CD8-positive, alpha-beta T cell (primary cell): ENCODE measurements at regions of chr6 and their contacts with region 1.

Region 1: GRCh38 chr6:41367700-41368099 is 32.3 kb downstream of the NCR2 start:
- DNase-seq: peak in 1 of 9 experiments; percentile 42
- ATAC-seq: no peak
- H3K4me3 ChIP-seq: no peak overlapping the region
- H3K4me3 Mint-ChIP-seq: no peak overlapping the region
- H3K27ac ChIP-seq: no peak overlapping the region
- H3K27ac Mint-ChIP-seq: no peak overlapping the region
- H3K4me1 ChIP-seq: peaks cover 16% of the 10 kb centered on the region
- H3K4me1 Mint-ChIP-seq: peaks cover 24% of the 10 kb centered on the region
- H3K27me3 ChIP-seq: peaks cover 21 to 35% of the 10 kb centered on the region in 2 experiments
- H3K27me3 Mint-ChIP-seq: peaks cover 25% of the 10 kb centered on the region
- CTCF ChIP-seq: no peak

Region 2: GRCh38 chr6:41306187-41306854 is 61.4 kb before region 1 on chr6:
- CTCF ChIA-PET with region 1: interaction called, 44 read pairs
- POLR2A ChIA-PET with region 1: no interaction called
- intact Hi-C with region 1: loop called (anchors 1 kb)
- DNase-seq: peak in 7 of 9 experiments; percentile 19 to 78 (median 34)
- ATAC-seq: no peak
- H3K4me3 ChIP-seq: no peak overlapping the region
- H3K4me3 Mint-ChIP-seq: no peak overlapping the region
- H3K27ac ChIP-seq: no peak overlapping the region
- H3K27ac Mint-ChIP-seq: no peak overlapping the region
- H3K4me1 ChIP-seq: peaks cover 4% of the 10 kb centered on the region
- H3K4me1 Mint-ChIP-seq: peaks cover 13% of the 10 kb centered on the region
- H3K27me3 ChIP-seq: no peaks in the 10 kb centered on the region
- H3K27me3 Mint-ChIP-seq: no peaks in the 10 kb centered on the region
- CTCF ChIP-seq: peak; percentile 79

Region 3: GRCh38 chr6:41334482-41335040 is 33.1 kb before region 1 on chr6:
- CTCF ChIA-PET with region 1: interaction called, 20 read pairs
- POLR2A ChIA-PET with region 1: interaction called, 4 read pairs
- intact Hi-C with region 1: loop called (anchors 1 to 2 kb)
- DNase-seq: peak in 2 of 9 experiments; percentile 47 to 62
- ATAC-seq: no peak
- H3K4me3 ChIP-seq: no peak overlapping the region
- H3K4me3 Mint-ChIP-seq: peak overlapping the region; percentile 69
- H3K27ac ChIP-seq: peak overlapping the region; percentile 47 to 87
- H3K27ac Mint-ChIP-seq: peak overlapping the region; percentile 98
- H3K4me1 ChIP-seq: peaks cover 57% of the 10 kb centered on the region
- H3K4me1 Mint-ChIP-seq: peaks cover 64% of the 10 kb centered on the region
- H3K27me3 ChIP-seq: no peaks in the 10 kb centered on the region
- H3K27me3 Mint-ChIP-seq: no peaks in the 10 kb centered on the region
- CTCF ChIP-seq: no peak

Region 4: DNA sequence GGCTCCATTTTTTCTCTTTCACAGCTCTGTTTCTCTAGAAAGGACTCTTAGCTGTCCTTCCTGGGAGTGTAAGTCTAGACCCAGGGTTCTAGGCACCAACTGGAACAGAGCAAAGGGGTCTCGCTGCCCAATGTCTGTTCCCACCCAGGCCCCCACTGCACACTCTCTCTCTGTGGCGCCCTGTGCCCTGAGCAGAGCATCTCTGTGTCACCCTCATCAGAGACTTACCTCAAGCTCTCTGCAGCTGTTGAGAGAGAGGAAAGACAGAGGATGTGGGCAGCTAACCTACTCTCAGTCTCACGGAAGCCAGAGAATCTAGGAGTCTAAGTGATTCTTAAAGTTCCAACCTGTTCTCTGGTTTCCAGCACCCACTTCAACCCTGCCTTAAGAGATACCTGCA is 22.8 kb before region 1 on chr6:
- CTCF ChIA-PET with region 1: interaction called, 28 read pairs
- POLR2A ChIA-PET with region 1: no interaction called
- intact Hi-C with region 1: no loop called
- DNase-seq: peak in 8 of 9 experiments; percentile 16 to 85 (median 48)
- ATAC-seq: peak; percentile 99
- H3K4me3 ChIP-seq: no peak overlapping the region
- H3K4me3 Mint-ChIP-seq: peak overlapping the region; percentile 37
- H3K27ac ChIP-seq: peak overlapping the region in 1 of 2 experiments; percentile 59
- H3K27ac Mint-ChIP-seq: peak overlapping the region; percentile 90
- H3K4me1 ChIP-seq: peaks cover 20% of the 10 kb centered on the region
- H3K4me1 Mint-ChIP-seq: peaks cover 28% of the 10 kb centered on the region
- H3K27me3 ChIP-seq: no peaks in the 10 kb centered on the region
- H3K27me3 Mint-ChIP-seq: peaks cover under 1% of the 10 kb centered on the region
- CTCF ChIP-seq: no peak

Region 5: GRCh38 chr6:41352396-41352795 is 15.3 kb before region 1 on chr6:
- CTCF ChIA-PET with region 1: interaction called, 21 read pairs
- POLR2A ChIA-PET with region 1: no interaction called
- intact Hi-C with region 1: no loop called
- DNase-seq: peak in 1 of 9 experiments; percentile 32
- ATAC-seq: no peak
- H3K4me3 ChIP-seq: no peak overlapping the region
- H3K4me3 Mint-ChIP-seq: no peak overlapping the region
- H3K27ac ChIP-seq: no peak overlapping the region
- H3K27ac Mint-ChIP-seq: no peak overlapping the region
- H3K4me1 ChIP-seq: no peaks in the 10 kb centered on the region
- H3K4me1 Mint-ChIP-seq: no peaks in the 10 kb centered on the region
- H3K27me3 ChIP-seq: no peaks in the 10 kb centered on the region
- H3K27me3 Mint-ChIP-seq: peaks cover 7% of the 10 kb centered on the region
- CTCF ChIP-seq: no peak

Region 6: DNA sequence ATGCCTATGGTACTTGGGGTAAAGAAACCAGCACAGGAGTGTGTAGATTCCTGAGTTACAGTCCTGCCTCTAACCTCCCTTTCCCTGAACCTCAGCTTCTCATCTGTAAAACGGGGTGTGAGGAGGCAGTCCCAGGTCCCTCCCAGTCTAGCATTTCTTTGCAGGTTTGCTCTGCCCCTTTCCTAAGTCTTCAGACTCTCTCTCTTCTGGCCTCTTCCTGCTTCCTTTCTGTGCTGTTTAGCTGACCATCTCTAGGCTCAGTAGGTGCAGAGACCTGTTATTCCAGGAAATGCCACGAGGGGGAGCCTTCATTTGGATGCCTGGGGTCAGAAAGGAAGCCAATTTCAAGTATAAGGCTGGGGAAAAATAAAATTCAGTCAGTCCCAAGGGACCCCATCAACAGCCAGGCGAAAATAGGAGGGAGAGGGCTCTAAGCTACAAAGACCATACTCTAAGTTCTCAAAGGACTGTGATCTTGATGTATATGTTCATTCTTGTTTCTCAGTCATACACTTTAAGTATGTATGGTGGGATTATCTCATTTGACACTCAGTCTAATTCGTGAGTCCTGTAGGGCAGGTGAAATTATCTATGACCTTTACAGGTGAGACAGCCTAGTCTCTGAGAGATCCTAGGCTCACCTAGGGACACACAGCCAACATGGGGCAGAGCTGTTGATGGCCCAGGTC is 56.8 kb after region 1 on chr6:
- CTCF ChIA-PET with region 1: interaction called, 5 read pairs
- POLR2A ChIA-PET with region 1: no interaction called
- intact Hi-C with region 1: loop called in 1 of 2 experiments (anchors 1 kb)
- DNase-seq: peak; percentile 67 to 89 (median 78)
- ATAC-seq: peak; percentile 62
- H3K4me3 ChIP-seq: no peak overlapping the region
- H3K4me3 Mint-ChIP-seq: no peak overlapping the region
- H3K27ac ChIP-seq: no peak overlapping the region
- H3K27ac Mint-ChIP-seq: no peak overlapping the region
- H3K4me1 ChIP-seq: peaks cover 32% of the 10 kb centered on the region
- H3K4me1 Mint-ChIP-seq: peaks cover 9% of the 10 kb centered on the region
- H3K27me3 ChIP-seq: peaks cover 16 to 28% of the 10 kb centered on the region in 2 experiments
- H3K27me3 Mint-ChIP-seq: peaks cover 21% of the 10 kb centered on the region
- CTCF ChIP-seq: peak; percentile 91

Region 7: GRCh38 chr6:41591859-41592502 is 224.3 kb after region 1 on chr6:
- CTCF ChIA-PET with region 1: interaction called, 15 read pairs
- POLR2A ChIA-PET with region 1: no interaction called
- intact Hi-C with region 1: loop called in 1 of 2 experiments (anchors 1 kb)
- DNase-seq: peak; percentile 65 to 88 (median 76)
- ATAC-seq: peak; percentile 87
- H3K4me3 ChIP-seq: no peak overlapping the region
- H3K4me3 Mint-ChIP-seq: no peak overlapping the region
- H3K27ac ChIP-seq: no peak overlapping the region
- H3K27ac Mint-ChIP-seq: no peak overlapping the region
- H3K4me1 ChIP-seq: no peaks in the 10 kb centered on the region
- H3K4me1 Mint-ChIP-seq: peaks cover 2% of the 10 kb centered on the region
- H3K27me3 ChIP-seq: no peaks in the 10 kb centered on the region
- H3K27me3 Mint-ChIP-seq: no peaks in the 10 kb centered on the region
- CTCF ChIP-seq: peak; percentile 75

Region 8: DNA sequence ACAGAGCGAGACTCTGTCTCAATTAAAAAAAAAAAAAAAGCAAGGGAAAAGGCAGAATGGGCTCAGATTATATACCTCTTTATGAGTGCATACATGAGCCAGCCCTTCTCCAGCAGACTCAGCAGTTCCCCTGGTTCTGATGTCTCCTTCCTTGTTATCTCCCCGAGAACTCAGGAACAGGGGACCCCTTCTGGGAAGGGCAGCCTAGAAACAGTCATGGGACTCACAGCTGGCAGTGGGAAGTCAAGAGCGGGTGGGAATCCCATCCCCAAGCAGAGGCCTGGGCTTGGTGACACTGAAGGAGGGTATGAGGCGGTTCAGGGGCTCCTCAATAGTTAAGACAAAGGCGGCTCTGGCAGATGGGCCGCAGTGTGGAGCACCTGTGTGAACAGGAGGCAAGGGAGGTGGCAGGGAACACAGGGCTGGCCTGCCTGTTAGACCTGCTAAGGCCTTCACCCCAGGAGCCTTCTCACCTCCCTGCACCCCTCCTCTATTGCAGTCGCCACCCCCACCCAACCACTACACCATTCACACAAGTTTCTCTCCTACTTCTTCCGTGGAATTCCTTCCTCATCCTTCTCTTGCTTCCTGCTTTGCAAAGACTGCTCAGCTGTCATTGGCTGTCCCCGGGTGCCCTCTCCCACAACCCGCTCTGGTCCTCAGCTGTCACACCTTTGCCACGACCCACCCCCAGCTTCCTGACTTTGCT is 240.9 kb after region 1 on chr6:
- CTCF ChIA-PET with region 1: no interaction called
- POLR2A ChIA-PET with region 1: no interaction called
- intact Hi-C with region 1: no loop called
- DNase-seq: no peak
- ATAC-seq: no peak
- H3K4me3 ChIP-seq: no peak overlapping the region
- H3K4me3 Mint-ChIP-seq: no peak overlapping the region
- H3K27ac ChIP-seq: no peak overlapping the region
- H3K27ac Mint-ChIP-seq: no peak overlapping the region
- H3K4me1 ChIP-seq: no peaks in the 10 kb centered on the region
- H3K4me1 Mint-ChIP-seq: no peaks in the 10 kb centered on the region
- H3K27me3 ChIP-seq: no peaks in the 10 kb centered on the region
- H3K27me3 Mint-ChIP-seq: peaks cover 18% of the 10 kb centered on the region
- CTCF ChIP-seq: no peak